Sigmoid colon (tissue), 7 donors: ENCODE measurements at regions of chr10 and their contacts with region 1.

Region 1: GRCh38 chr10:45008524-45009161 is 7.9 kb downstream of the ZNF22 start:
- DNase-seq: peak; percentile 64
- H3K4me3 ChIP-seq: no peak overlapping the region
- H3K27ac ChIP-seq: peak overlapping the region in 2 of 4 donors; percentile 15
- H3K4me1 ChIP-seq: peaks cover 0 to 12% (median 3%) of the 10 kb centered on the region in 4 donors
- H3K27me3 ChIP-seq: no peaks in the 10 kb centered on the region
- CTCF ChIP-seq: peak in 3 of 4 experiments; percentile 56 to 70 (median 69)
- EP300 ChIP-seq: no peak
- POLR2A ChIP-seq: no peak

Region 2: GRCh38 chr10:43671656-43672531 is 1336.7 kb before region 1 on chr10:
- intact Hi-C with region 1: loop called (anchors 10 kb)
- DNase-seq: peak; percentile 77
- H3K4me3 ChIP-seq: no peak overlapping the region
- H3K27ac ChIP-seq: peak overlapping the region in 1 of 4 donors; percentile 29
- H3K4me1 ChIP-seq: peaks cover 0 to 23% (median 17%) of the 10 kb centered on the region in 4 donors
- H3K27me3 ChIP-seq: peaks cover 0 to 20% (median 10%) of the 10 kb centered on the region in 3 donors
- CTCF ChIP-seq: peak; percentile 74 to 87 (median 82)
- EP300 ChIP-seq: no peak
- POLR2A ChIP-seq: no peak

Region 3: GRCh38 chr10:45532480-45532879 is 523.8 kb after region 1 on chr10:
- intact Hi-C with region 1: no loop called
- DNase-seq: no peak
- H3K4me3 ChIP-seq: no peak overlapping the region
- H3K27ac ChIP-seq: no peak overlapping the region
- H3K4me1 ChIP-seq: no peaks in the 10 kb centered on the region
- H3K27me3 ChIP-seq: no peaks in the 10 kb centered on the region
- CTCF ChIP-seq: no peak
- EP300 ChIP-seq: no peak
- POLR2A ChIP-seq: no peak

Region 4: GRCh38 chr10:45672181-45673073 is 663.8 kb after region 1 on chr10 and contains the start of gene ZFAND4:
- intact Hi-C with region 1: loop called (anchors 5 kb)
- DNase-seq: peak; percentile 99
- H3K4me3 ChIP-seq: peak within 1 kb of the TSS; percentile 66 to 84 (median 74)
- H3K27ac ChIP-seq: peak within 1 kb of the TSS; percentile 84 to 88 (median 86)
- H3K4me1 ChIP-seq: peaks cover 0 to 12% (median 5%) of the 10 kb centered on the region in 4 donors
- H3K27me3 ChIP-seq: no peaks in the 10 kb centered on the region
- CTCF ChIP-seq: peak in 1 of 4 experiments; percentile 40
- EP300 ChIP-seq: no peak
- POLR2A ChIP-seq: no peak
- total RNA-seq, gene ZFAND4: 13.9 to 24.2 (median 17.9) TPM